B cell (primary cell): ENCODE measurements at regions of chr6 and their contacts with region 1.

Region 1: DNA sequence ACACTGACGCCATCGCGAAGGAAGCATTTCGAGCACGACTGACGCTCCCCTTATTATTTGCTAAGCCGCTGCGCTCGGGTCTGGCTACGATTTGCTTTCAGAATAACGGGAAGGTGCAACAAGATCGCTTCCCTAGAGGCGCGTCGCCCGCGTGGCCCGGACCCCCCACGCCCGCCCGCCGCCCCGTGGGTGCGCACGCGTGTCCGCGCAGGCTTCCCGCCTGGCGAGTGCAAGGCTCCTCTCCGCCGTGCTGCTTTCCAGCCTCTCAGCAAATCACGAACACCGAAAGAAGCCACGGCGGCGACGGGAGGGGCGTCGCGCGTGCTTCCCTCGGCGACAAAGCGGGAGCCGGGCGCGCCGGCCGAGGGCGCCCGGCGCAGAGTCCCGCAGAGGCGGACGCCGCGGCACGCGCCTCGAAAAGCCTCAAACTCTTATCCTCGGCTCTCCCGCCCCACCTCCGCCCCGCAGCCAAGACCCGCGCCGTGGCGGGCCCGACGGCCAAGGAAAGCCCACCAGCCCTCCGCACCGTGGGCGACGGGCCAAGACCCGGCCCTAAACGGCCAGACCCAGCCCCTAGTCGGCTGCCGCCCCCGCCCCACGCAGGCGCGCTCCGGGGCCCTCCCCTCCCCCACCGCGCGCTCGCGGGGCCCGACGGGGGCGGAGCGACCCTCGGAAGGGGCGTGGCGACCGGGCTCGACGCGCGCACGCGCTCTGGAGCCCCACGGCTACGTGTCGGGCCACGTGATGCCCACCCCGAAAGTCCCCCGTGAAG is 987 bp upstream of the QKI start:
- DNase-seq: peak; percentile 97
- ATAC-seq: peak; percentile 68
- H3K4me3 ChIP-seq: peak overlapping the region; percentile 45 to 77 (median 70)
- H3K4me3 Mint-ChIP-seq: peak overlapping the region; percentile 91
- H3K27ac ChIP-seq: peak overlapping the region; percentile 93 to 96
- H3K27ac Mint-ChIP-seq: peak overlapping the region; percentile 96
- H3K4me1 ChIP-seq: peaks cover 18 to 21% of the 10 kb centered on the region in 2 donors
- H3K4me1 Mint-ChIP-seq: peaks cover 28% of the 10 kb centered on the region
- H3K27me3 ChIP-seq: no peaks in the 10 kb centered on the region
- H3K27me3 Mint-ChIP-seq: peaks cover 4% of the 10 kb centered on the region
- CTCF ChIP-seq: no peak

Region 2: GRCh38 chr6:163367497-163368183 is 45.9 kb before region 1 on chr6:
- CTCF ChIA-PET with region 1: no interaction called
- POLR2A ChIA-PET with region 1: no interaction called
- intact Hi-C with region 1: no loop called
- DNase-seq: no peak
- ATAC-seq: no peak
- H3K4me3 ChIP-seq: no peak overlapping the region
- H3K4me3 Mint-ChIP-seq: no peak overlapping the region
- H3K27ac ChIP-seq: no peak overlapping the region
- H3K27ac Mint-ChIP-seq: no peak overlapping the region
- H3K4me1 ChIP-seq: no peaks in the 10 kb centered on the region
- H3K4me1 Mint-ChIP-seq: no peaks in the 10 kb centered on the region
- H3K27me3 ChIP-seq: peaks cover 0 to 7% (median 2%) of the 10 kb centered on the region in 4 experiments
- H3K27me3 Mint-ChIP-seq: peaks cover 21% of the 10 kb centered on the region
- CTCF ChIP-seq: no peak

Region 3: DNA sequence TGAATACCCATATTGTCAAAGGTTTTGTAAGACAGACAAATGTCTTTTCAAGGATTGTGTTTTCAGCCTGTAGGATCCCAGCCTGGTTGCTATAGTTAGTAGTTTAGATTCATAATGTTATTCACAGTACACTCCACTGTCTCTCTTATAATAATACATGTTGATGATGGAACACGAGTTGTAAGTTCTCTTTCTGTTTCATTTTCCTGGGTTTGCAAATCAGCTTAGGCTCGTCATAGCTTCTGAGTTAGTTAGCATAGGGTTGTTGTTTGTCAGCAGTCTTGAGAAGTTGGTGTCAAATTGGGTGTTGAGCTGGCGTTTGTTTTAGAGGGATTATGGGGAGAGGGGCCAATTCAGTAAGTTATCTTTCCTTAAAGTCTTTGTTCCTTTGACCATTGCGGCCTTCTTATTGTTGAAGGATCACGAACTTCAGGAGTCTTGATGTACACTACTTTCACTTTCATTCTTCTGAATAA is 46.8 kb after region 1 on chr6:
- CTCF ChIA-PET with region 1: interaction called, 5 read pairs
- POLR2A ChIA-PET with region 1: no interaction called
- intact Hi-C with region 1: loop called (anchors 2 kb)
- DNase-seq: peak; percentile 74
- ATAC-seq: peak; percentile 83
- H3K4me3 ChIP-seq: peak overlapping the region; percentile 49 to 73 (median 55)
- H3K4me3 Mint-ChIP-seq: peak overlapping the region; percentile 98
- H3K27ac ChIP-seq: peak overlapping the region; percentile 72 to 75
- H3K27ac Mint-ChIP-seq: peak overlapping the region; percentile 97
- H3K4me1 ChIP-seq: peaks cover 23 to 31% of the 10 kb centered on the region in 2 donors
- H3K4me1 Mint-ChIP-seq: peaks cover 63% of the 10 kb centered on the region
- H3K27me3 ChIP-seq: no peaks in the 10 kb centered on the region
- H3K27me3 Mint-ChIP-seq: no peaks in the 10 kb centered on the region
- CTCF ChIP-seq: no peak

Region 4: DNA sequence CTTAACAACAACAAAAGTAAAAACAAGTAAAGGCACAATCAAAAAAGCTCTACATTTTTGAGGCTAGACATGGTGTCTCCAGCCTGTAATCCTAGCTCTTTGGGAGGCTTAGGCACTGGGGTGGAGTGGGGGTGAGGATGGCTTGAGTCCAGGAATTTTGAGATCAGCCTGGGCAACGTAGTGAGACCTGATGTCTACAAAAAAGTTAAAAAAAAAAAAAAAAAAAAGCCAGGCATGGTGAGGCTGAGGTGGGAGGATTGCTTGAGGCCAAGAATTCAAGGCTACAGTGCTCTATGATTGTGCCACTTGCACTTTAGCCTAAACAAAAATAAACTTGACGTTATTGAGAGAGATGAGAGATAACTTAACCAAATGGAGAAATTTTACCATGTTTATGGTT is 61.0 kb after region 1 on chr6:
- CTCF ChIA-PET with region 1: no interaction called
- POLR2A ChIA-PET with region 1: no interaction called
- intact Hi-C with region 1: no loop called
- DNase-seq: no peak
- ATAC-seq: no peak
- H3K4me3 ChIP-seq: no peak overlapping the region
- H3K4me3 Mint-ChIP-seq: no peak overlapping the region
- H3K27ac ChIP-seq: no peak overlapping the region
- H3K27ac Mint-ChIP-seq: no peak overlapping the region
- H3K4me1 ChIP-seq: no peaks in the 10 kb centered on the region
- H3K4me1 Mint-ChIP-seq: peaks cover 3% of the 10 kb centered on the region
- H3K27me3 ChIP-seq: no peaks in the 10 kb centered on the region
- H3K27me3 Mint-ChIP-seq: no peaks in the 10 kb centered on the region
- CTCF ChIP-seq: no peak

Region 5: GRCh38 chr6:163667372-163668060 is 254.0 kb after region 1 on chr6:
- CTCF ChIA-PET with region 1: no interaction called
- POLR2A ChIA-PET with region 1: no interaction called
- intact Hi-C with region 1: loop called (anchors 1 kb)
- DNase-seq: peak; percentile 87
- ATAC-seq: peak; percentile 93
- H3K4me3 ChIP-seq: peak overlapping the region in 3 of 5 experiments; percentile 35 to 55 (median 37)
- H3K4me3 Mint-ChIP-seq: peak overlapping the region; percentile 73
- H3K27ac ChIP-seq: peak overlapping the region; percentile 49 to 61
- H3K27ac Mint-ChIP-seq: peak overlapping the region; percentile 94
- H3K4me1 ChIP-seq: peaks cover 38 to 57% of the 10 kb centered on the region in 2 donors
- H3K4me1 Mint-ChIP-seq: peaks cover 42% of the 10 kb centered on the region
- H3K27me3 ChIP-seq: no peaks in the 10 kb centered on the region
- H3K27me3 Mint-ChIP-seq: no peaks in the 10 kb centered on the region
- CTCF ChIP-seq: no peak

Region 6: DNA sequence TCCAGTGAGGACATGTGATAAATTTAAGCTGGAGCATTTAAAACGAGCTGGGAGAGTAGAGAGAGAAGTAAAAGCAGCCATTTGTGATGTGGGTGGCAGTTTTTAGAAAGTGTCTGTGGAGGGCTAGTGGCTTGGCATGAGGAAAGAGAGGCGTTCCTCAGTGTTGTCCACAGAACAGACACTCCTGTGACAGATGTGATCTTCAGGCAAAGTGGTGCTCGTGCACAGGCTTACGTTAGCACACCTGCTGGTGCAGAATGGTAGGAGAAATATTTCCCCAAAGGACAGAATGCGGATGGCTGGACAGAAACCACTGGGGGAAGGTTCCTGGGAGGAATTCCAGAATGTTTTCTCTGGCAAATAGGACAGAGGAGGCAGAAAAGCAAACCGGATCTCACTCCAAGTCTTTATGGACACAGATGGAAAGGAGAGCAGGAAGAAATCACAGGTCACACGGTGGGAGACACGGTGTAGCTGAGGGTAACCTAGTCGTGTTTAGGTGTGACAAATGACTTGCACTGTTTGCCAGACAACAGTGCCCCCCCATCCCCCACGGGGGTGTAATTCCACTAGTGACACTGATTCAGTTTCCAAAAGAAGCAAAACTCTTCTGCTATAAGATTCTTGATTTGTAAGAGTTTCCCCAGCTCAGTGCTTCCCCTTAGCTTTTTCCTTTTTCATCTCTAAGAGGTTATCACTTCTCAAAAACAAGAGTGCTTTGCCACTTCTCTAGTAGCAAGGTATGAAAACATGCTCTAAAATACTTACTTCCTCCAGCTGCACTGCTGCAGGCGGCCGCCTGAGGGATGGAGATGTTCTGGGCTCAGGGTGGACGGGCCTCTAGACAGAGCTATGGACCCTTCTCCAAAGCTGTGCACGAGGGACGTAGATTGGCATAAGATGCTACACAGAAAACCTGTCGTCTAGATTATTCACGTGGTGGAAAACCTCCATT is 294.1 kb after region 1 on chr6:
- CTCF ChIA-PET with region 1: interaction called, 3 read pairs
- POLR2A ChIA-PET with region 1: no interaction called
- intact Hi-C with region 1: loop called (anchors 2 kb)
- DNase-seq: peak; percentile 65
- ATAC-seq: peak; percentile 53
- H3K4me3 ChIP-seq: no peak overlapping the region
- H3K4me3 Mint-ChIP-seq: peak overlapping the region; percentile 44
- H3K27ac ChIP-seq: no peak overlapping the region
- H3K27ac Mint-ChIP-seq: peak overlapping the region; percentile 73
- H3K4me1 ChIP-seq: peaks cover 98 to 99% of the 10 kb centered on the region in 2 donors
- H3K4me1 Mint-ChIP-seq: peaks cover 100% of the 10 kb centered on the region
- H3K27me3 ChIP-seq: no peaks in the 10 kb centered on the region
- H3K27me3 Mint-ChIP-seq: no peaks in the 10 kb centered on the region
- CTCF ChIP-seq: peak; percentile 47

Region 7: GRCh38 chr6:163756079-163756478 is 342.5 kb after region 1 on chr6:
- CTCF ChIA-PET with region 1: no interaction called
- POLR2A ChIA-PET with region 1: no interaction called
- intact Hi-C with region 1: loop called (anchors 5 kb)
- DNase-seq: peak; percentile 88
- ATAC-seq: peak; percentile 98
- H3K4me3 ChIP-seq: no peak overlapping the region
- H3K4me3 Mint-ChIP-seq: peak overlapping the region; percentile 61
- H3K27ac ChIP-seq: no peak overlapping the region
- H3K27ac Mint-ChIP-seq: peak overlapping the region; percentile 43
- H3K4me1 ChIP-seq: peaks cover 27 to 35% of the 10 kb centered on the region in 2 donors
- H3K4me1 Mint-ChIP-seq: peaks cover 39% of the 10 kb centered on the region
- H3K27me3 ChIP-seq: peaks cover 0 to 11% (median 3%) of the 10 kb centered on the region in 4 experiments
- H3K27me3 Mint-ChIP-seq: peaks cover 11% of the 10 kb centered on the region
- CTCF ChIP-seq: no peak